Activated T-helper 2 cell treated with anti-CD3 and anti-CD28 coated beads, Interferon-gamma antibody, Interleukin-2, Interleukin-4, amounts not matched to agents 10 μg/mL and 5 μg/mL and 100 μg/mL, durations not matched to agents 14 hours and 24 hours and 36 hours (primary cell): ENCODE measurements at regions of chr17 and their contacts with region 1.

Region 1: DNA sequence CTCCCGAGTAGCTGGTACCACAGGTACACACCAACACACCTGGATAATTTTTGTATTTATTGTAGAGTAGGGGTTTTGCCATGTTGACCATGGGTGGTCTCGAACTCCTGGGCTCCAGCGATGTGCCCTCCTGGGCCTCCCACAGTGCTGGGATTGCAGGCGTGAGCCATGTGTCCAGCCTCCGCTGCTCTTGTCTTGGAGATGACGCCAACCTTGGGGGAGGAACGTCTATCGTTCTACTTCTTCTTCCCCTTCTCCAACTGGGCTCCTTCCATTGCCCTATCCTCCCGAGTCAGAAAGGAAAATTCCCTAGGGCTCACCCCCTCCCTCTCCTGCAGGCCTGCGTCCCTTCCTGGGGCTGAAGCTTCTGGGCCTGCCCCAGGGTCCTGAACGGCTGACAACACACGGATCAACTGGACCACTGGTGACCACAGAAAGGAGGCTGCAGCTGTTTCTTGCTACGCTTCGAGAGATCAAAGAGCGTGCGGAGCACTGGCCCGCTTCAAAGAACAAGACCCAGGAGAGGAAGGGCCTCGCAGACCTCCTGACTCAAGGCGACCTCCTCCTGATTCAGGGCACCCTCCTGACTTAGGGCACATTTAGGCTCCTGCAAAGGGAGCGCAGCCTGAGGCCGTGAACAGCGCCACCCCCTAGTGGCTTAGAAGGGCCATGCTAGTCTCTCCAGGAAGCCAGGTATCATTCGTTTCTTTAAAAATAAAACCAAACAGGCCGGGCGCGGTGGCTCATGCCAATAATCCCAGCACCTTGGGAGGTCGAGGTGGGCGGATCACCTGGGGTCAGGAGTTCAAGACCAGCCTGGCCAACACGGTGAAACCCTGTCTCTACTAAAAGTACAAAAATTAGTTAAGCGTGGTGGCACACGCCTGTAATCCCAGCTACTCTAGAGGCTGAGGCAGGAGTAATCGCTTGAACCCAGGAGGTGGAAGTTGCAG is 48.5 kb upstream of the HELZ start:
- DNase-seq: peak; percentile 57
- H3K4me3 Mint-ChIP-seq: no peak overlapping the region
- H3K27ac Mint-ChIP-seq: no peak overlapping the region
- H3K4me1 Mint-ChIP-seq: no peaks in the 10 kb centered on the region
- H3K27me3 Mint-ChIP-seq: no peaks in the 10 kb centered on the region

Region 2: GRCh38 chr17:67221062-67221998 is 72.2 kb before region 1 on chr17:
- intact Hi-C with region 1: loop called (anchors 1 kb)
- DNase-seq: no peak
- H3K4me3 Mint-ChIP-seq: no peak overlapping the region
- H3K27ac Mint-ChIP-seq: peak overlapping the region; percentile 25
- H3K4me1 Mint-ChIP-seq: peaks cover 20% of the 10 kb centered on the region
- H3K27me3 Mint-ChIP-seq: no peaks in the 10 kb centered on the region

Region 3: DNA sequence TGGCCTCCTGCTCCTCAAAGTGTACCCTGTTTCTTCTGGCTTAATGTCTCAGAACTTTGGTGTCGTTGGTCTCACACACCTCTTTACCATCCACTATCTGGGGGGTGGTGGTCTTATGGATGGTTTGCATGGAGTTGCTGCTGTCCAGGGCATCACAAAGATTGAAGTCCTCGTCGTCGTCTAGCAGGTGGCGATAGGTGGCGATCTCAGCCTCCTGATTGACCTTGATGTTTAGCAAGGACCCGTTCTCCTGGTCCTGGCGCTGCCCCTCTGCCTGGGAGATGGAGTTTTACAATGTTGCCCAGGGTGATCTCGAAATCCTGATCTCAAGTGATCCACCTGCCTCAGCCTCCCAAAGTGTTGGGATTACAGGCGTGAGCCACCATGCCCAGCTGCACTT is 17.5 kb before region 1 on chr17:
- intact Hi-C with region 1: no loop called
- DNase-seq: no peak
- H3K4me3 Mint-ChIP-seq: no peak overlapping the region
- H3K27ac Mint-ChIP-seq: no peak overlapping the region
- H3K4me1 Mint-ChIP-seq: no peaks in the 10 kb centered on the region
- H3K27me3 Mint-ChIP-seq: peaks cover 4% of the 10 kb centered on the region